ENCODE measurements at regions of chr4 and their contacts with region 1.

Region 1: DNA sequence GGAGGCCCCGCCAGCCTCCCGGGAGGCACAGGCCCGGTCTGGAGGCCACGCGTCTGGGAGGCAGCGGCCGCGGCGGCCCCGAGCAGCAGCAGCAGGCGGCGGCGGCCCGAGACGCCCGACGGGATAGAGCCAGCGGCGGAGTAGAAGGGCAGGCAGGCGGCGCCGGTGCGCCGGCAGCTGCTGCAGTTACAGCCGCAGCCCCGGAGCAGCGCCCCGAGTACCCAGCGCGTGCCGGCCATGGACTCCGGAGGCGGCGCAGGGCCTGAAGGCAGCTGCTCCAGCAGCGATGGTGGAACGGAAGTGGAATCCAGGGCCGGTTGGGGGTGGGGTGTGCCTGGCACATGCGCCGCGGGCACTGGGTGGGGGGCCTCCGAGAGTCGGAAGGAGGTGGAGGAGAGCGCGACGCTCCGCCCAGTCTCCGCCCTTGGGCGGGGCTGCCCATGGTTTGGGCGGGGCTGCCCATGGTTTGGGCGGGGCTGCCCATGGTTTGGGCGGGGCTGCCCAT is at the start of gene GRSF1:
- DNase-seq: peak; percentile 60
- ATAC-seq: peak; percentile 86
- H3K4me3 ChIP-seq: peak within 1 kb of the TSS; percentile 85
- H3K27ac ChIP-seq: peak within 1 kb of the TSS; percentile 85
- H3K4me1 ChIP-seq: peaks cover 13% of the 10 kb centered on the region
- H3K27me3 ChIP-seq: no peaks in the 10 kb centered on the region
- CTCF ChIP-seq: peak in 1 of 3 experiments; percentile 32; a peak in 2 of 6 replicates
- EP300 ChIP-seq: no peak
- POLR2A ChIP-seq: peak; percentile 88
- RAD21 ChIP-seq: no peak
- polyA plus RNA-seq, gene GRSF1: 37.5 to 59.6 TPM

Region 2: DNA sequence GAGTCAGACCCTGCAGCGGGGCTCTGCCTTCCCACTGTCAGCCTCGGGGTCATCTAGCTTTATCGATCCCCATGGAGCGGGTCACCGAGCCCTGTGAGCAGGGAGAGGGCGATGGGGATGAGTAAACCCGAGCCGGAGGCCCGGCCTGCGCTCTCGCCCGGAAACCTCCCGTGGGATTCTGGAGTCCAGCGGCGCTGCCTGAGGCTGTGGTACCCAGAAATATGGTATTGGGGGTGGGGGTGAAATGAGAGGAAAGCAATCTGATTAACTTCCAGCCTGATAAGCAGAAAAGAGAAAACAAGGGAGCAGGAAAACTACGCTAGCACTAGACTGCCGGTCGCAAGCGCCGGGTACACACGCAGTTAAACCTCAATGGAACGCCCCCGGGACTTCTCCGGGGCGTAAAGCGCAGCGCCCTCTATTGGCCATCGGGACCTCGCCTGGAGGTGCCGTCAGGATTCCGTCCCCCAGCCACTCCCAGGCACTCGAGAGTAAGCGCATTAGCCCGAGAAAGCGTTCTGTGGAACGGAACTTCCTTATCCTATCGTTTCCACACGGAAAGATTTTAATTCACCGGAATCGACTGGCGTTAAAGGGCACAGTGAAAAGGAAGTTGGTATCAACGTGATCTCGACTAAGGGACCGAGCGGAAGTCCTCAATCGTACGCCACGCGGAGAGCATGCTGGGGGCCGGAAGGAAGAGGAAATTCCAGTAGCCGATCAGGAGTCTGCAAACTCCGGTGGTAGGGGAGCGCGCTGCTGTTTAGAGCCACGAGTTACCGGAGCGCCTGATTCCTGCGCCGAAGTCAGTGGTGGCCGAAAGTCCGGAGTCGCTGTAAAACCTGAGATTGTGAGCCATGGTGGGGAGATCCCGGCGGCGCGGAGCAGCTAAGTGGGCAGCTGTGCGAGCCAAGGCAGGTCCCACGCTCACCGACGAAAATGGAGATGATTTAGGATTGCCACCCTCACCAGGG is 151.5 kb before region 1 on chr4 and contains the start of gene UTP3:
- CTCF ChIA-PET with region 1: interaction called, 3 read pairs
- POLR2A ChIA-PET with region 1: interaction called, 4 read pairs
- RAD21 ChIA-PET with region 1: interaction called, 3 read pairs
- SMC1A ChIA-PET with region 1: interaction called, 6 read pairs
- in situ Hi-C with region 1: no loop called
- intact Hi-C with region 1: loop called (anchors 2 kb)
- DNase-seq: peak; percentile 95
- ATAC-seq: peak; percentile 93
- H3K4me3 ChIP-seq: peak within 1 kb of the TSS; percentile 90
- H3K27ac ChIP-seq: peak within 1 kb of the TSS; percentile 94
- H3K4me1 ChIP-seq: peaks cover 3% of the 10 kb centered on the region; the same call in 1 of the 2 replicates
- H3K27me3 ChIP-seq: no peaks in the 10 kb centered on the region
- CTCF ChIP-seq: peak; percentile 94 to 100 (median 97)
- EP300 ChIP-seq: no peak; a peak in 1 of 4 replicates
- POLR2A ChIP-seq: peak; percentile 89
- RAD21 ChIP-seq: peak; percentile 75
- polyA plus RNA-seq, gene UTP3: 15.8 to 21.1 TPM

Region 3: GRCh38 chr4:70901984-70902576 is 62.4 kb after region 1 on chr4 and contains the start of gene MOB1B:
- CTCF ChIA-PET with region 1: interaction called, 8 read pairs
- POLR2A ChIA-PET with region 1: interaction called, 8 read pairs
- RAD21 ChIA-PET with region 1: interaction called, 6 read pairs
- SMC1A ChIA-PET with region 1: interaction called, 5 read pairs
- in situ Hi-C with region 1: no loop called
- intact Hi-C with region 1: loop called (anchors 2 kb)
- DNase-seq: peak; percentile 34
- ATAC-seq: peak; percentile 94
- H3K4me3 ChIP-seq: peak within 1 kb of the TSS; percentile 99
- H3K27ac ChIP-seq: peak within 1 kb of the TSS; percentile 53
- H3K4me1 ChIP-seq: no peaks in the 10 kb centered on the region
- H3K27me3 ChIP-seq: no peaks in the 10 kb centered on the region
- CTCF ChIP-seq: peak; percentile 23 to 49 (median 41); a peak in 4 of 6 replicates
- EP300 ChIP-seq: no peak
- POLR2A ChIP-seq: peak; percentile 83
- RAD21 ChIP-seq: peak; percentile 51
- polyA plus RNA-seq, gene MOB1B: 1.9 TPM

Region 4: DNA sequence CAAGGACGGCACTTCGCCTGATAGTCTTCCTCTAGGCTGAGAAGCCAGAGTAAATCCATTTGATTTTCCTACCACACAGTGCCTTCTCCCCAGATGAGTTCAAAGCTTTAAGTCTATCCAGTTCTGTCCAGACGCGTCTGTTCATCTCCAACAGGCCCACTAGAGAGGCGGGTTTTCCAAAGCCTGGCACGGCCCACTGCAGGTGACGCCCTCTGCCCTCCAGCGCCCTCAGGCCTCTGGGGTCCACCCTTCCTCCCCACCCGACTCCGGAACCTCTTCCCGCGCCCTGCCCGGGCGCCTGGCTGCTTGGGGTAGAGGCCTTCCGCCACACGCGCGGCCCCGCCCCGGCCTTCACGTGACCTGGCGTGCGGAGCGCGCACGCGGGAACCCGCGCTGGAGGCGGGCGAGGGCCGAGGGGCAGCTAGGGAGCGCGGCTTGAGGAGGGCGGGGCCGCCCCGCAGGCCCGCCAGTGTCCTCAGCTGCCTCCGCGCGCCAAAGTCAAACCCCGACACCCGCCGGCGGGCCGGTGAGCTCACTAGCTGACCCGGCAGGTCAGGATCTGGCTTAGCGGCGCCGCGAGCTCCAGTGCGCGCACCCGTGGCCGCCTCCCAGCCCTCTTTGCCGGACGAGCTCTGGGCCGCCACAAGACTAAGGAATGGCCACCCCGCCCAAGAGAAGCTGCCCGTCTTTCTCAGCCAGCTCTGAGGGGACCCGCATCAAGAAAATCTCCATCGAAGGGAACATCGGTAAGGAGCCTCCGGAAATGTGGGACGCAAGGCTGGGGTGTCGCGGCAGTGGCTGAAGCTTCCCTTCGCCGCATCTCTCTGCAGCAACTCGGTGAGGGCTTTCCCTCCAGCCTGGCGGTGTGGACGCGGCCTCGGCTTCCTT is 153.8 kb after region 1 on chr4 and contains the start of gene DCK:
- CTCF ChIA-PET with region 1: interaction called, 4 read pairs
- POLR2A ChIA-PET with region 1: interaction called, 16 read pairs
- RAD21 ChIA-PET with region 1: interaction called, 6 read pairs
- SMC1A ChIA-PET with region 1: interaction called, 13 read pairs
- in situ Hi-C with region 1: loop called (anchors 5 kb)
- intact Hi-C with region 1: loop called (anchors 5 kb)
- DNase-seq: no peak
- ATAC-seq: peak; percentile 87
- H3K4me3 ChIP-seq: peak within 1 kb of the TSS; percentile 95
- H3K27ac ChIP-seq: peak within 1 kb of the TSS; percentile 82
- H3K4me1 ChIP-seq: 0 out of 2 replicates have a peak, but pooled peaks cover 3% of the 10 kb centered on the region
- H3K27me3 ChIP-seq: no peaks in the 10 kb centered on the region
- CTCF ChIP-seq: no peak
- EP300 ChIP-seq: no peak
- POLR2A ChIP-seq: peak; percentile 94
- RAD21 ChIP-seq: no peak
- polyA plus RNA-seq, gene DCK: 20.0 to 26.7 TPM

Region 5: GRCh38 chr4:71217688-71218087 is 378.0 kb after region 1 on chr4:
- CTCF ChIA-PET with region 1: no interaction called
- POLR2A ChIA-PET with region 1: no interaction called
- RAD21 ChIA-PET with region 1: no interaction called
- SMC1A ChIA-PET with region 1: no interaction called
- in situ Hi-C with region 1: no loop called
- intact Hi-C with region 1: no loop called
- DNase-seq: no peak
- ATAC-seq: no peak
- H3K4me3 ChIP-seq: no peak overlapping the region
- H3K27ac ChIP-seq: no peak overlapping the region
- H3K4me1 ChIP-seq: no peaks in the 10 kb centered on the region
- H3K27me3 ChIP-seq: no peaks in the 10 kb centered on the region; a peak in 1 of 4 replicates
- CTCF ChIP-seq: no peak
- EP300 ChIP-seq: no peak
- POLR2A ChIP-seq: no peak
- RAD21 ChIP-seq: no peak

Region 6: DNA sequence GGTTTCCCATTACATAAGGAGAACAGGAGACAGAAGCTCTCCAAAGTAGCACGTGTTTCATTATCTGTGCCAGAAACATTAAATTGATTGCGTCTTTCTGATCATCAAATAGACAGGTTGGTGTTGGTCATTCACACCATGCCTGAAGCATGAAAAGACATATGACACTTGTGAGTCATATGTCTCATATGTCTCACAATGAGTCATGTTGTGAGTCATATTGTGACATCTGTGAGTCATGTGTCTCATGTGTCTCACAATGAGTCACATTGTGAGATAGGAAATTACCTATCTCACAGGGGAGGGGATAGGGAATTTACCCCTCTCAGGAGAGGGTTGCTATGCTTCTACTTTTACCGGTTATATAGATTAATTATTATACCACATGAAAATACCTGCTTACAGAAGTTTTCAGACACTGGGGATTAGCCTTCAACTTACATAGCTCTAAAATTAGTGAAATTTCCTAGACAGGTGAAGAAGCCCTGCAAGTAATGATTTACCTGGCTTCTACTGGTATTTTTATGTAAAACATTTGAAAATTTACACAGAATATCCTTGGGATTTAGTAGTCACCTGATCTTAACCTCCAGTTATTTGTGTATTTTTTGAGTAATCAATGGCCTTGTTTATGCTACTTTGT is 1273.0 kb after region 1 on chr4:
- CTCF ChIA-PET with region 1: no interaction called
- POLR2A ChIA-PET with region 1: no interaction called
- RAD21 ChIA-PET with region 1: no interaction called
- SMC1A ChIA-PET with region 1: no interaction called
- in situ Hi-C with region 1: no loop called
- intact Hi-C with region 1: loop called (anchors 10 kb)
- DNase-seq: peak; percentile 88
- ATAC-seq: peak; percentile 94
- H3K4me3 ChIP-seq: no peak overlapping the region
- H3K27ac ChIP-seq: peak overlapping the region; percentile 32; the same call in 1 of the 2 replicates
- H3K4me1 ChIP-seq: no peaks in the 10 kb centered on the region; the same call in 1 of the 2 replicates
- H3K27me3 ChIP-seq: no peaks in the 10 kb centered on the region
- CTCF ChIP-seq: no peak
- EP300 ChIP-seq: peak; percentile 100
- POLR2A ChIP-seq: no peak
- RAD21 ChIP-seq: 0 out of 2 replicates have a peak, but pooled peaks have one; percentile 4

Measured in GM12878 (cell line).